MCF 10A (cell line): ENCODE measurements at regions of chr1 and their contacts with region 1.

Region 1: DNA sequence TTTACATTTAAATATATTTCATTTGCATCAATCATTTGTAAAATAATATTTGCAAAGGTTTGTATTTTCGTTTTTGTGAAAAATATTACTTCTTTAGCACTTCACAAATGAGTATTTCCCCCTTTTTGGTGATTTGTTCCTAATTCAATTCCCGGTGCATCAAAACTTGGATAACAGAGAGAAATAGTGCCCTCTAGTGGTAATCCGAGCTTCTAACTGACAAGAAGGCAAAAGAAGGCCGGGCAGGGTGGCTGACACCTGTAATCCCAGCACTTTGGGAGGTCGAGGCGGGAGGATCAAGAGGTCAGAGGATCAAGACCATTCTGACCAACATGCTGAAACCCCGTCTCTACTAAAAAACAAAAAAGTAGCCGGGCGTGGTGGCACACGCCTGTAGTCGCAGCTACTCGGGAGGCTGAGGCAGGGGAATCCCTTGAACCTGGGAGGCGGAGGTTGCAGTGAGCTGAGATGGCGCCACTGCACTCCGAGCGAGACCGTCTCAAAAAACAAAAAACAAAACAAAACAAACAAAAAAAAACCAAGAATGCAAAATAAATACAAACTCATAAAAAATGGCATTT is 137.7 kb downstream of the COL11A1 start:
- DNase-seq: peak; percentile 68
- H3K4me3 Mint-ChIP-seq: no peak overlapping the region
- H3K27ac Mint-ChIP-seq: no peak overlapping the region
- H3K4me1 Mint-ChIP-seq: no peaks in the 10 kb centered on the region
- H3K27me3 Mint-ChIP-seq: peaks cover 11% of the 10 kb centered on the region
- CTCF ChIP-seq: peak; percentile 67

Region 2: DNA sequence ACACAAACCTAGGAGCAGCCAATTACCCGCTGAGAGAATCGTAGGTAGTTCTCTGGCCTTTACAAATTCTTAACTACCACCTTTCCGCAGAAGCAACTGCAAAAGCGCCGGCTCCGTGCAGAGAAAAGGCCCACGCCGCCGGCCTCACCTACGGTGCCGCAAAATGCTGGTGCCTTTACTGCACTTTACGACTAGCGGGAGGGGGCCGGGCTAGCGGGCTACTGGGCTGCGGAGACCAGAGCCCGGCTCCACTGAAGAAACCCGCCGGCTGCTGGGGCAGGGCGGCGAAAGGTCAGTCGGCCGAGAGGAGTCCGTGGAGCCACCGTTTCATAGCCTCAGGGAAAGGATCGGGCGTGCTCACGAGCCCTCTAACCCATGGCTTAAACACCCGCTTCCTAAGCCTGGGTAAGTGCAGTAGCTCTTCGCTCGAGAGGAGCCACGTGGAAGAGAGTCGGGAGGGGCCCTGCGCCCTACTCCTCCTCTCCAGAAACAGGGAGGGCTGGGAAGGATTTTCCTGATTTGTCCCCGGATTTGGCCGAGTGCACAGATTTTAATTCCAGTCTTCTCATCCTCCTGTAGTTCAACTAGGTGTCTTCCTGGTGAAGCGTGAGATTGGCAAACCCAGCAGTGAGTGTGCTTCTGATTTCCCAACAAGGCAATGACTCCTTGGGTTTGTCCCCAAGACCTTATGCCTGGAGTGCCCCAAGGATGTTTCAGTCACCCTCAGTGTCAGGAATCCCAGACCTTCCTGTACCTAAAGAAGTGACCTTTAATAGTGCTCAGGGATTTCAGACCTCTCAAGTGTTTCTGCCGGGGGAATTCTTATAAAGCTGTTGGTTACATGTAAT is 1944.7 kb before region 1 on chr1 and contains the start of gene DPH5:
- CTCF ChIA-PET with region 1: no interaction called
- POLR2A ChIA-PET with region 1: no interaction called
- intact Hi-C with region 1: no loop called
- DNase-seq: peak; percentile 90
- H3K4me3 Mint-ChIP-seq: peak within 1 kb of the TSS; percentile 78
- H3K27ac Mint-ChIP-seq: peak within 1 kb of the TSS; percentile 79
- H3K4me1 Mint-ChIP-seq: peaks cover 14% of the 10 kb centered on the region
- H3K27me3 Mint-ChIP-seq: no peaks in the 10 kb centered on the region
- CTCF ChIP-seq: no peak
- total RNA-seq, gene DPH5: 63.5 and 76.8 TPM in 2 replicates

Region 3: DNA sequence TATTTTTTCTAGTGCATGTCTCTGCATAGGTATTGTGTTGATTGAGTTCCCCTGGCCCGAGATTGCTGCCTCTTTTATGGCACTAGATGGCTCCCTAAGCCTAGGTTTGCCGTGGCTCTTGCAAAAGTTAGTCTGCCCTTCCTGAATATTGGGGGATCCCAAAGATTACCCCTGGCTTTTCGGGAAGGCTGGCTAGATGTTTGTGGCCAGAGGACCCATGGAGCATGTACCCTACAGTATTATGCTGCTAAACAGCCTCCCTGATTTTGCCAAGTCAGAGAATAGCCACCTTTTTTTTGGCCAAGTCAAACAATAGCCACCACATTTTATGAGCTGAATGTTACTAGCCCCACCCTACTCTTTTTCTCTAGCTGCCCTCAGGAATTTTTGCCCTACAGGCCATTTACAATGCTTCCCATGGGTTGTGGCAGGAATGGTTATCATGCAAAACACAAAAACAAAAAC is 1317.1 kb before region 1 on chr1:
- CTCF ChIA-PET with region 1: interaction called, 8 read pairs
- POLR2A ChIA-PET with region 1: no interaction called
- intact Hi-C with region 1: loop called (anchors 1 kb)
- DNase-seq: peak; percentile 56
- H3K4me3 Mint-ChIP-seq: no peak overlapping the region
- H3K27ac Mint-ChIP-seq: no peak overlapping the region
- H3K4me1 Mint-ChIP-seq: no peaks in the 10 kb centered on the region
- H3K27me3 Mint-ChIP-seq: peaks cover 74% of the 10 kb centered on the region
- CTCF ChIP-seq: peak; percentile 67

Region 4: GRCh38 chr1:101820071-101820470 is 1150.5 kb before region 1 on chr1:
- CTCF ChIA-PET with region 1: interaction called, 4 read pairs
- POLR2A ChIA-PET with region 1: no interaction called
- intact Hi-C with region 1: loop called (anchors 1 kb)
- DNase-seq: peak; percentile 66
- H3K4me3 Mint-ChIP-seq: no peak overlapping the region
- H3K27ac Mint-ChIP-seq: no peak overlapping the region
- H3K4me1 Mint-ChIP-seq: no peaks in the 10 kb centered on the region
- H3K27me3 Mint-ChIP-seq: peaks cover 95% of the 10 kb centered on the region
- CTCF ChIP-seq: peak; percentile 28

Region 5: GRCh38 chr1:102550729-102551384 is 419.7 kb before region 1 on chr1:
- CTCF ChIA-PET with region 1: interaction called, 4 read pairs
- POLR2A ChIA-PET with region 1: no interaction called
- intact Hi-C with region 1: loop called (anchors 2 kb)
- DNase-seq: peak; percentile 36
- H3K4me3 Mint-ChIP-seq: no peak overlapping the region
- H3K27ac Mint-ChIP-seq: no peak overlapping the region
- H3K4me1 Mint-ChIP-seq: no peaks in the 10 kb centered on the region
- H3K27me3 Mint-ChIP-seq: no peaks in the 10 kb centered on the region
- CTCF ChIP-seq: peak; percentile 12

Region 6: DNA sequence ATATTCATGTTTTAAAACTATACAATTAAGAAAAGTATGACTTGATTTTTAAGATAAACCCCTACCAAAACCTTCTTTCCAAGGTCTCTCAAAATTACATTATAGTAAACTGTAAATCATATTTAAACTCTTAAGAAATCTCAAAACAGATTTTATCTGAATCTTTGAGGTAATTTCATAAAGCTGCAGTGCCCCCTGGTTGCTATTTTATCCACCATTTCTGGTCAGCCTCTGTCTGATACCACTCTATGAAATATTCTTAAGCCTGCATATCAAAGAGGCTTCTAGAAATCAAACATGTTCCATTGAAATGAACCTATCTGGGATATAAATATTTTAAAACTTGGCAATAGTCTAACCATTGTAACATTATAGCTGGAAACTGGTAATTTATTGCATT is 179.6 kb before region 1 on chr1:
- CTCF ChIA-PET with region 1: no interaction called
- POLR2A ChIA-PET with region 1: no interaction called
- intact Hi-C with region 1: loop called (anchors 10 kb)
- DNase-seq: peak; percentile 30
- H3K4me3 Mint-ChIP-seq: no peak overlapping the region
- H3K27ac Mint-ChIP-seq: no peak overlapping the region
- H3K4me1 Mint-ChIP-seq: no peaks in the 10 kb centered on the region
- H3K27me3 Mint-ChIP-seq: no peaks in the 10 kb centered on the region
- CTCF ChIP-seq: peak; percentile 6

Region 7: GRCh38 chr1:103461161-103462105 is 490.8 kb after region 1 on chr1:
- CTCF ChIA-PET with region 1: interaction called, 7 read pairs
- POLR2A ChIA-PET with region 1: no interaction called
- intact Hi-C with region 1: loop called (anchors 10 kb)
- DNase-seq: peak; percentile 26
- H3K4me3 Mint-ChIP-seq: no peak overlapping the region
- H3K27ac Mint-ChIP-seq: no peak overlapping the region
- H3K4me1 Mint-ChIP-seq: no peaks in the 10 kb centered on the region
- H3K27me3 Mint-ChIP-seq: peaks cover 13% of the 10 kb centered on the region
- CTCF ChIP-seq: peak; percentile 59

Region 8: DNA sequence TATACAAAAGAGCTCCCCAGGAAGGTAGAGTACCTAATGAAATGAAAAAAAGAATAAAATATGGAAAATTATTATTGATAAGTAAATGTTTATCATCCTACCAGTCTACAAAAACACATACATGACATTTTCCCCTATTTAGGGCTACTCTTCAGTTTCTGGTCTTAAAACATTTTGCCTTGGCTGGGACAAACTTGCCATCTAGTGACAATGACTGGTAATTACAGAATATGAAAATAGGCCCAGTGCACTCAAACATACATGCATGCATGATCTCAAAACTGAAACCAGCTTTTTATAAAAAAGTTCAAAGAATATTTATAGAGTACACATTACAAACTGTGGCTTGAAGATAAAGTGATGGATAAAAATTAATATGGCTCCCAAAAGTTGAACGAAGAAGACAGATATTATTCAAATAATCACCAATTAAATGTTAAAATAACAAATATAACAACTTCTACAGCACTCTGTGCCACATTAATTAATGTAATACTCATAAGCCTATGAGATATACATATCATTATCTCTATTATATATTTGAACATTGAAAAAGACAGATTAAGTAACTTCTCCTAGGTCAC is 544.4 kb after region 1 on chr1:
- CTCF ChIA-PET with region 1: no interaction called
- POLR2A ChIA-PET with region 1: no interaction called
- intact Hi-C with region 1: loop called (anchors 5 kb)
- DNase-seq: peak; percentile 68
- H3K4me3 Mint-ChIP-seq: no peak overlapping the region
- H3K27ac Mint-ChIP-seq: no peak overlapping the region
- H3K4me1 Mint-ChIP-seq: peaks cover 14% of the 10 kb centered on the region
- H3K27me3 Mint-ChIP-seq: no peaks in the 10 kb centered on the region
- CTCF ChIP-seq: peak; percentile 63